ENCODE measurements at regions of chr2 and their contacts with region 1.

Region 1: GRCh38 chr2:102615622-102616436 is 3.5 kb upstream of the SLC9A2 start:
- DNase-seq: peak; percentile 45
- H3K4me3 ChIP-seq: no peak overlapping the region
- H3K27ac ChIP-seq: no peak overlapping the region
- H3K4me1 ChIP-seq: peaks cover 2% of the 10 kb centered on the region
- H3K27me3 ChIP-seq: peaks cover 35 to 74% of the 10 kb centered on the region in 2 experiments
- CTCF ChIP-seq: peak; percentile 82 to 89
- POLR2A ChIP-seq: no peak

Region 2: DNA sequence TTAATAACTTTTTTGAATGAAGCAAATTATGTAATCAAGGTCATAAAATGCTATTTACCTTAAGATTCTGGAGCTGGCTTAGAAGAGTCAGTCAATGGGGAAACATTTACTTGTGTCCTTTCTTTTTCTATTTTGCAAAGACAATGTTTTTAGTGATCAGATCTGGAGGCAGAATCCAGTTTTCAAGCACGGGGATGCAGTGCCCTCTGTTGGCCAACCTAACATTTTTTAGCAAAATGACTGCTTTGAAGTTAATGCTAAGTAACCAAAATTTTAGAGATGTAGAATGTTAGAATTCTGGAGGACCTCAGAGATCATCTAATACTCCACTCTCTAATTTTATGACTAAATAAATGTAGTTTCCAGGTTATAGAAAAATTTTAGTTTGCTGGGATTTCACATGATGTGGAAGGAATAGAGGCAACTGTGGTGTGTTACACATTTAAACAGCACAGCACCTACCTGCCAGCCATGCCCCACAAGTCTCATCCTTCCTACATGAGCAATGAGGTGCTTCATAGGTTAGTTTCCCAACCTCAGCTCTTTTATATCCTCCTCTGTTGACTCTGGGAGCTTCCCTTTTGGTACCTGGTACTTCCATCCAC is 166.4 kb before region 1 on chr2:
- CTCF ChIA-PET with region 1: interaction called, 11 read pairs
- POLR2A ChIA-PET with region 1: no interaction called
- dilution Hi-C with region 1: no loop called
- intact Hi-C with region 1: no loop called
- DNase-seq: peak; percentile 67
- H3K4me3 ChIP-seq: no peak overlapping the region
- H3K27ac ChIP-seq: no peak overlapping the region
- H3K4me1 ChIP-seq: no peaks in the 10 kb centered on the region
- H3K27me3 ChIP-seq: peaks cover 0 to 5% of the 10 kb centered on the region in 2 experiments
- CTCF ChIP-seq: peak; percentile 53 to 58
- POLR2A ChIP-seq: no peak

Region 3: GRCh38 chr2:102467514-102467913 is 148.3 kb before region 1 on chr2:
- CTCF ChIA-PET with region 1: interaction called, 218 read pairs
- POLR2A ChIA-PET with region 1: no interaction called
- dilution Hi-C with region 1: no loop called
- intact Hi-C with region 1: no loop called
- DNase-seq: no peak
- H3K4me3 ChIP-seq: no peak overlapping the region
- H3K27ac ChIP-seq: no peak overlapping the region
- H3K4me1 ChIP-seq: no peaks in the 10 kb centered on the region
- H3K27me3 ChIP-seq: peaks cover 5 to 32% of the 10 kb centered on the region in 2 experiments
- CTCF ChIP-seq: no peak
- POLR2A ChIP-seq: no peak

Region 4: DNA sequence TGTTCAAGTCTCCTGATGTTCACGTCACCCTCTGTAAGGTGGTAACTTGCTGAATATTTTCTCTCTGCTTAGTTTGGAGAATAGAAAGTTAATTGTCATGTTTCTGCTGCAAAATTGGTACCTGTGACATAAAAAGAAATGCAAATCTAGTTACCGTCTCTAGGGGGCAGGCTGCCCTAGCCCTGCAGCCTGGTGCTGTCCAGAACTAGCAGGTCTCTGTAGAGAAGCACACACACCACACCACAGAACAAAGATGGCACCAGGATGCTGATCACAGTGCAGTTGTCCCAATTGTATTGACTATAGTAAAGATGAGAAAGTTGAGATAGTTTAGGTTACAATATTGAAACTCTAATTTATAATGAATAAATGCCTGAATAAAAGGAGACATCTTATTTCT is 95.8 kb before region 1 on chr2:
- CTCF ChIA-PET with region 1: interaction called, 6 read pairs
- POLR2A ChIA-PET with region 1: no interaction called
- dilution Hi-C with region 1: no loop called
- intact Hi-C with region 1: loop called (anchors 1 kb)
- DNase-seq: peak; percentile 24
- H3K4me3 ChIP-seq: no peak overlapping the region
- H3K27ac ChIP-seq: no peak overlapping the region
- H3K4me1 ChIP-seq: no peaks in the 10 kb centered on the region
- H3K27me3 ChIP-seq: peaks cover 0 to under 1% of the 10 kb centered on the region in 2 experiments
- CTCF ChIP-seq: peak; percentile 54 to 66
- POLR2A ChIP-seq: no peak

Region 5: GRCh38 chr2:102806250-102806837 is 190.5 kb after region 1 on chr2:
- CTCF ChIA-PET with region 1: interaction called, 13 read pairs
- POLR2A ChIA-PET with region 1: no interaction called
- dilution Hi-C with region 1: no loop called
- intact Hi-C with region 1: loop called (anchors 10 kb)
- DNase-seq: peak; percentile 79
- H3K4me3 ChIP-seq: no peak overlapping the region
- H3K27ac ChIP-seq: no peak overlapping the region
- H3K4me1 ChIP-seq: no peaks in the 10 kb centered on the region
- H3K27me3 ChIP-seq: no peaks in the 10 kb centered on the region
- CTCF ChIP-seq: peak; percentile 83 to 88
- POLR2A ChIP-seq: no peak